ENCODE measurements at regions of chr17 and their contacts with region 1.

Region 1: DNA sequence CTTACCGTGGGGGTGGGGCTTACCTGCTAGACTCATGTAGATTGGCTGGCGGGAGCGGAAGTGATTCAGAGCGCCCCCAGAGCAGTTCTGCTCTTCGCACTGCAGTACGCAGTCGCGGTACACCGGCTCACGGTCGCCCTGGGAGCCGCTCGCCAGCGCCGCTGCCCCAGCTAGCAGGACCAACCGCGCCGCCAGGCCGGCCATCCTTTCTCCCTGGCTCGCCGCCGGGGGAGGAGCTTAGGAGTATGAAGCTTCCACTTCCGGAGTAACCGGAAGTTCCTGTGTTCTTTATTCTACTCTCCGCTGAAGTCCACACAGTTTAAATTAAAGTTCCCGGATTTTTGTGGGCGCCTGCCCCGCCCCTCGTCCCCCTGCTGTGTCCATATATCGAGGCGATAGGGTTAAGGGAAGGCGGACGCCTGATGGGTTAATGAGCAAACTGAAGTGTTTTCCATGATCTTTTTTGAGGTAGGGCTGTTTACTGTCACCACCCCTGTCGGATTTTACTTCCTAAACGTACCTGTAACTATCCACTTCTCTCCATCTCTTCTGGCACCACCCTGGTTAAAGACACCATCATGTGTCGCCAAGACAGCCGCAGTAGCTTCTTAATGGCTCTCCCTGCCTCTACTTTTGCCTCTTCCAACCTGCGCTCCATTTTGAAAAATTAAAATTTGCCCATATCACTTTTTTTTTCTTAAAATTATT is at the start of gene PGAP3:
- DNase-seq: peak; percentile 94 to 97 (median 94)
- ATAC-seq: peak; percentile 93
- H3K4me3 ChIP-seq: peak within 1 kb of the TSS; percentile 50
- H3K27ac ChIP-seq: peak within 1 kb of the TSS; percentile 78
- H3K4me1 ChIP-seq: peaks cover 15 to 20% of the 10 kb centered on the region in 2 experiments; a peak in 4 of 5 replicates
- H3K27me3 ChIP-seq: no peaks in the 10 kb centered on the region
- CTCF ChIP-seq: peak in 1 of 3 experiments; percentile 31; a peak in 2 of 6 replicates
- EP300 ChIP-seq: no peak
- POLR2A ChIP-seq: peak; percentile 82
- RAD21 ChIP-seq: no peak
- polyA plus RNA-seq, gene PGAP3: 0.38 to 0.76 TPM

Region 2: DNA sequence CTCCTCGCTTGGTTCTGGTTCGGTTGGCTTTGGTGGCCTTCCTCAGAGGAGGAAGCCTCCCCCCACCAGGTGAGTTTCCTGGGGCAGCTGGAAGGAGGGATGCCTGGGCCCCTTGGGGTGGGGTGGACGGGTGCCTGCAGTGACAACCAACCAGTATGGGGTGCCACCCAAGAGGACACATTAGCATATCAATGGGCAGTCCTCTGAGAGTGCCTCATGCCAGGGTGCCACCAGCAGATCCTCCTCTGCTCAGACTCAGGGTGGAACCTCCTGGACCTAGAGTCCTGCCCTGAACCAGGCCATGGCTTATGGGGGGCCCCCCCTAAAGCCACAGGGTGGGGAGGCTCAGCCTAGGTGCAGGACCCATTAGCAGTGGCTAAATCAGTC is 58.5 kb before region 1 on chr17:
- CTCF ChIA-PET with region 1: no interaction called
- POLR2A ChIA-PET with region 1: no interaction called
- in situ Hi-C with region 1: no loop called
- intact Hi-C with region 1: no loop called
- DNase-seq: no peak
- ATAC-seq: no peak
- H3K4me3 ChIP-seq: no peak overlapping the region
- H3K27ac ChIP-seq: no peak overlapping the region
- H3K4me1 ChIP-seq: peaks cover 0 to 41% of the 10 kb centered on the region in 2 experiments; a peak in 4 of 5 replicates
- H3K27me3 ChIP-seq: no peaks in the 10 kb centered on the region
- CTCF ChIP-seq: no peak
- EP300 ChIP-seq: no peak
- POLR2A ChIP-seq: no peak
- RAD21 ChIP-seq: no peak

Region 3: DNA sequence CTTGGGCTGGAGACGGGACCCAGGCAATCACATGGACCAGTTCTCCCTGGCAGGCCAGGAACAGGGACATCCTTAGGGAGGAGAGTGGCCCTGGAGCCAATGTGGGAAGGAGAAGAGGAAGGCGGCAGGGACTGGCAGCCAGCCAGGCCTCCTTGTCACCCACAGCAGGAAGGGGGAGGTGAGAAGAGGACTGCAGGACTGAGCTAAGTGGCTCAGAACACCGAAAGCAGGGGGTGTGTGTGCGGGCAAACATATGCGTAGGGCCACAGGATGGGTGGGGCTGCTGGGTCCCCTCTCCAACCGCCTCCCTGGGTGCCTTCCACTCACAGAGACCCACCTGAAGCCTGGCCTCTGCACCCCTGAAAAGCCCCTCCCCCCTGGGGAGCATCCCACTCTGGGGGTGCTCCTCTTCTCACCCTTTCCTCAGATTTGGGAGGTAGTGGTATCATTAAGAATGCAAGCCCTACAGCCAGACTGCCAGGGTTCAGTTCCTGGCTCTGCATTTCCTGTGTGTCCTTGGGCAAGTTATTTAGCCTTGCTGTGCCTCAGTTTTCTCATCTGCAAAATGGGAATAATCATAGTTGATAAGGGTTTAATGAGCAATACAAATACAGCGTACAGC is 11.7 kb before region 1 on chr17:
- CTCF ChIA-PET with region 1: no interaction called
- POLR2A ChIA-PET with region 1: interaction called, 16 read pairs
- in situ Hi-C with region 1: no loop called
- intact Hi-C with region 1: no loop called
- DNase-seq: peak; percentile 60 to 69 (median 68)
- ATAC-seq: peak; percentile 32
- H3K4me3 ChIP-seq: no peak overlapping the region
- H3K27ac ChIP-seq: peak overlapping the region; percentile 17; the same call in 1 of the 3 replicates
- H3K4me1 ChIP-seq: peaks cover 30 to 68% of the 10 kb centered on the region in 2 experiments; a peak in 4 of 5 replicates
- H3K27me3 ChIP-seq: no peaks in the 10 kb centered on the region
- CTCF ChIP-seq: no peak
- EP300 ChIP-seq: no peak
- POLR2A ChIP-seq: no peak
- RAD21 ChIP-seq: no peak

Region 4: DNA sequence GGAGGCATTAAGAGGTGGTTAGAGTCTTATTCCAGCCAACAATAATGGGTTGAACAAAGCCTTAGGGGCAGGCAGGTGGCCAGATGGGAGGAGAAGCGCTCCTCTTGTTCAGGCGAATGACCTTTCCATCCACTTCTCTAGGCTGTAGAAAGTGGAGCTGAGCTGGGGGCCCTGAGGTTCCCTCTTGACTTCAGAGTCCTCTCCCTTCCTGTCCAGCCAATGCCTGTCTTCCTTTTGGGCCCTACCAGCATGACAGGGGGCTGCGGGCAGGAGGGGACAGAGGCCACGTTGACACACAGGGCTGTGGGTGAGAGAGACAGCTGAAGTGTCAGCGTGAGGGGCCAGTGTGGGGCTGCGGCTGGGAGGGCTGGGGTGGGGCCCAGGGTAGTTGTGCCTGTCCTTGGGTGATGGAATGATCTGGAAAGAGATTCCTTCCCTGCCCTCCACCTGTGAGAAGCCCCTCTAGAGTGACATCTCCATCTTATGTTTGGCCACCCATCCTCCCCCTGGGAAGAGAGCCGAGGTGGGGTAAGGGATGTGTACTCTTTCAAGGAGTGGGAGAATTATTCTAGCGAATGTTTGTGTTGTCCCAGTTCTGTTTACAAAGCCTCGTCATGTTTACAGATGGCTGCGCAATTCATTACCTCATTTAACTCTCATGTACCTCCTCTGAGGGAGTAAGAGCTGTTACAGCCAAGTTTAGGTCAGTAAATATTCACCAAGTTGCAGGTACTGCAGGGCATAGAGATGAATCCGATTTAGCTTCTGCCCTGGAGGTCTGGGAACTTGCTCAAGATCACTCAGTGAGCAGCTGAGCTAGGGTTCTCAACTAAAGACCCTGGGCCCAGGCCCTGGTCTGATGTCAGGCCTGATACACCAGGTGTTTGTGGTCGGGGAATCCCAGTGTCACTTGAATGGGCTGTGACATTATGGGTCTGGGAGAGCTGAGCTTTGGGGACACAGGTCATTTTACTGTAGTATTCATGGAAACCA is 15.2 kb after region 1 on chr17:
- CTCF ChIA-PET with region 1: no interaction called
- POLR2A ChIA-PET with region 1: interaction called, 10 read pairs
- in situ Hi-C with region 1: no loop called
- intact Hi-C with region 1: no loop called
- DNase-seq: no peak
- ATAC-seq: peak; percentile 32; the same call in 2 of the 3 replicates
- H3K4me3 ChIP-seq: no peak overlapping the region
- H3K27ac ChIP-seq: no peak overlapping the region
- H3K4me1 ChIP-seq: peaks cover 0 to 26% of the 10 kb centered on the region in 2 experiments; a peak in 3 of 5 replicates
- H3K27me3 ChIP-seq: no peaks in the 10 kb centered on the region; a peak in 1 of 5 replicates
- CTCF ChIP-seq: no peak
- EP300 ChIP-seq: no peak
- POLR2A ChIP-seq: no peak
- RAD21 ChIP-seq: no peak

Region 5: GRCh38 chr17:39730095-39730921 is 42.3 kb after region 1 on chr17 and contains the start of gene MIEN1:
- CTCF ChIA-PET with region 1: no interaction called
- POLR2A ChIA-PET with region 1: interaction called, 4 read pairs
- in situ Hi-C with region 1: no loop called
- intact Hi-C with region 1: loop called (anchors 5 kb)
- DNase-seq: peak; percentile 90 to 98 (median 98)
- ATAC-seq: peak; percentile 93
- H3K4me3 ChIP-seq: peak within 1 kb of the TSS; percentile 74
- H3K27ac ChIP-seq: peak within 1 kb of the TSS; percentile 87
- H3K4me1 ChIP-seq: peaks cover 6 to 31% of the 10 kb centered on the region in 2 experiments; a peak in 4 of 5 replicates
- H3K27me3 ChIP-seq: no peaks in the 10 kb centered on the region
- CTCF ChIP-seq: peak; percentile 80 to 92 (median 85)
- EP300 ChIP-seq: no peak
- POLR2A ChIP-seq: peak; percentile 85
- RAD21 ChIP-seq: peak; percentile 63 to 72
- polyA plus RNA-seq, gene MIEN1: 70.5 to 78.9 TPM

Region 6: GRCh38 chr17:39782980-39783379 is 95.0 kb after region 1 on chr17:
- CTCF ChIA-PET with region 1: no interaction called
- POLR2A ChIA-PET with region 1: no interaction called
- in situ Hi-C with region 1: no loop called
- intact Hi-C with region 1: no loop called
- DNase-seq: no peak
- ATAC-seq: no peak
- H3K4me3 ChIP-seq: no peak overlapping the region
- H3K27ac ChIP-seq: no peak overlapping the region
- H3K4me1 ChIP-seq: no peaks in the 10 kb centered on the region
- H3K27me3 ChIP-seq: peaks cover 8 to 14% of the 10 kb centered on the region in 2 experiments; a peak in 4 of 5 replicates
- CTCF ChIP-seq: no peak
- EP300 ChIP-seq: no peak
- POLR2A ChIP-seq: no peak
- RAD21 ChIP-seq: no peak